ENCODE measurements at regions of chr1 and their contacts with region 1.

Region 1: GRCh38 chr1:198543670-198544260 is 3.3 kb upstream of the ATP6V1G3 start:
- DNase-seq: no peak
- ATAC-seq: no peak
- H3K4me3 ChIP-seq: no peak overlapping the region
- H3K4me3 Mint-ChIP-seq: peak overlapping the region in 1 of 3 donors; percentile 4
- H3K27ac ChIP-seq: peak overlapping the region; percentile 30
- H3K27ac Mint-ChIP-seq: peak overlapping the region; percentile 79 to 85
- H3K4me1 ChIP-seq: peaks cover 0 to 17% of the 10 kb centered on the region in 2 experiments
- H3K4me1 Mint-ChIP-seq: peaks cover 44 to 56% (median 53%) of the 10 kb centered on the region in 3 donors
- H3K27me3 ChIP-seq: no peaks in the 10 kb centered on the region
- H3K27me3 Mint-ChIP-seq: no peaks in the 10 kb centered on the region

Region 2: GRCh38 chr1:198047913-198048312 is 495.9 kb before region 1 on chr1:
- CTCF ChIA-PET with region 1: no interaction called
- POLR2A ChIA-PET with region 1: no interaction called
- DNase-seq: peak in 1 of 35 experiments; percentile 10
- ATAC-seq: peak; percentile 45 to 77 (median 58)
- H3K4me3 ChIP-seq: no peak overlapping the region
- H3K4me3 Mint-ChIP-seq: no peak overlapping the region
- H3K27ac ChIP-seq: no peak overlapping the region
- H3K27ac Mint-ChIP-seq: no peak overlapping the region
- H3K4me1 ChIP-seq: peaks cover 0 to 6% of the 10 kb centered on the region in 2 experiments
- H3K4me1 Mint-ChIP-seq: peaks cover 15 to 18% (median 17%) of the 10 kb centered on the region in 3 donors
- H3K27me3 ChIP-seq: no peaks in the 10 kb centered on the region
- H3K27me3 Mint-ChIP-seq: no peaks in the 10 kb centered on the region

Region 3: GRCh38 chr1:198754670-198755069 is 210.9 kb after region 1 on chr1:
- CTCF ChIA-PET with region 1: no interaction called
- POLR2A ChIA-PET with region 1: interaction called in 1 of 2 experiments, 26 read pairs
- DNase-seq: no peak
- ATAC-seq: peak in 2 of 4 experiments; percentile 9 to 29
- H3K4me3 ChIP-seq: no peak overlapping the region
- H3K4me3 Mint-ChIP-seq: no peak overlapping the region
- H3K27ac ChIP-seq: no peak overlapping the region
- H3K27ac Mint-ChIP-seq: peak overlapping the region; percentile 68 to 73
- H3K4me1 ChIP-seq: no peaks in the 10 kb centered on the region
- H3K4me1 Mint-ChIP-seq: peaks cover 17 to 19% (median 19%) of the 10 kb centered on the region in 3 donors
- H3K27me3 ChIP-seq: no peaks in the 10 kb centered on the region
- H3K27me3 Mint-ChIP-seq: no peaks in the 10 kb centered on the region